GM12878 (cell line): ENCODE measurements at regions of chr12 and their contacts with region 1.

Region 1: GRCh38 chr12:49515266-49515665 is 23.6 kb upstream of the KCNH3 start:
- DNase-seq: no peak
- ATAC-seq: no peak
- H3K4me3 ChIP-seq: no peak overlapping the region
- H3K27ac ChIP-seq: no peak overlapping the region
- H3K4me1 ChIP-seq: no peaks in the 10 kb centered on the region
- H3K27me3 ChIP-seq: no peaks in the 10 kb centered on the region
- CTCF ChIP-seq: no peak
- EP300 ChIP-seq: no peak
- POLR2A ChIP-seq: no peak
- RAD21 ChIP-seq: no peak

Region 2: DNA sequence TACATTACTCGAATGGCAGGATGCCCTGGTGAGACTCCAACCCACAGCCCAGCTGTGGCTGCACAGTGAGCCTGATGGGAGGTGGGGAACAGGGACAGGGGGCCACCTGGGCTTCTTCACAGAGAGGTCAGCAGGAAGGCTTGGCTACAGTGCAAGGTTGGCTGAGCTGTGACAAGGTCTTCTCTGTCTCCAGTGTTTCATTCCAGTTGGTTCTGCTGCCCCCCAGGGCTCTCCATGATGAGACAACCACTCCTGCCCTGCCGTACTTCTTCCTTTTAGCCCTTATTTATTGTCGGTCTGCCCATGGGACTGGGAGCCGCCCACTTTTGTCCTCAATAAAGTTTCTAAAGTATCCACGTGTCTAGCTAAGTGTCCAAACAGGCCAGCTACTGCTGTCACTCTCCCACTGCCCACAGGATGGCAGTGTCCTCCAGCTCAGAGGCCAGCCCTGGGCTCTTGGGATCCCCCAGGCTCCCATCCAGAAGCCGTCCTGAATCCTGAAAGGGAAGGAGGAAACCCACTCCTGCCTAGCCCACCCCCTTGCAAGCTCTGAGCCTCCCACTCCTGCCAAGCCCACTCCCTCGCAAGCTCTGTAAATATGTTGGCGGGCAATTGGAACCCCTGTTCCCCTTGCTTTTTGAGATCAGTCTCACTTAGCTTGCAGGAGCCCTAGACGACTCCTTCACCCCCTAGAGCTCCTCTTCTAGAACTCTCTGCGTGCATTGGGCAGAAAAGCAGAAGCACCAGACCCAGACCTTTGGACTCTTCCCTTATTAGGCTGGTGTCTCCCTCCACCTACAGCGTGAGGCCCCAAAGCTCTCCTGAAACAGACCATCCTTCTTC is 183.7 kb before region 1 on chr12:
- CTCF ChIA-PET with region 1: interaction called, 24 read pairs
- POLR2A ChIA-PET with region 1: no interaction called
- RAD21 ChIA-PET with region 1: no interaction called
- SMC1A ChIA-PET with region 1: interaction called, 8 read pairs
- in situ Hi-C with region 1: no loop called
- intact Hi-C with region 1: no loop called
- DNase-seq: no peak
- ATAC-seq: peak; percentile 85
- H3K4me3 ChIP-seq: no peak overlapping the region
- H3K27ac ChIP-seq: no peak overlapping the region
- H3K4me1 ChIP-seq: no peaks in the 10 kb centered on the region
- H3K27me3 ChIP-seq: peaks cover 3 to 12% of the 10 kb centered on the region in 2 experiments
- CTCF ChIP-seq: peak; percentile 55 to 68 (median 59)
- EP300 ChIP-seq: no peak
- POLR2A ChIP-seq: no peak
- RAD21 ChIP-seq: peak; percentile 58

Region 3: DNA sequence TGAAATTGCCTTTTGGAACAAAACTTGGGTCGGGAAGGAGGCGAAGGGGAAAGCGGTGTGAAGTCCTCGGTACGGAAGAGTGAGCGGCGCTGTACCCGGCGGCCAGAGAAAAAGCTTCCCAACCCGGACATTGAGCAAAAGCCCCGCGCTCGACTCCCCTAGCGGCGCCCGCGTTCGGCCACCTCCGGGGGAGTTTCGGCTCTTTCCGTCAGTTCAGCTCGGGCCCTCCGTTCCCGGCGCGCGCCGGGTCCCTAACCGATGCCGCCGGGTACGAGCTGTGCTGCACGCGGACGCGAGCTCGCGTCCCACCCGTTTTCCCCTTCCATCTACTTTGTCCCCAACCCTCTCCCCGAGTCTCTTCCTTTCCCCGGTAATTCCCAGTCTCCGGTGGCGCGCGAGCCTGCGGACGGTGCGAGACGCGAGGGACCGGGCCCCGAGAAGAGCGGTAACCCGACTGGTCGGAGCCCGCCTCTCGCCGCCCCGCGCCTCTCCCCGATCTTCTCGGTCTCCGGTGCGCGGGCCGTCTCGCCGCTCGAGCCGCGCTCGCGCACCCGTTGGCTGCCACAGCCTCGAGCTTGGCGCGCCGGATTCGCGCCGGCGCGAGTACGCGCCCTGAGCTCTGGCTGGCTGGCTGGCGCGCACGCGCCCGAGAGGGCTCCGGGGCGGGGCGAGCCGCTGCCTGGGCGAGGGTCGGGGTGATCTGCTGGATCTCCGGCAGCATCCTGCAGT is 148.4 kb before region 1 on chr12:
- CTCF ChIA-PET with region 1: interaction called, 712 read pairs
- POLR2A ChIA-PET with region 1: interaction called, 5 read pairs
- RAD21 ChIA-PET with region 1: interaction called, 258 read pairs
- SMC1A ChIA-PET with region 1: interaction called, 740 read pairs
- in situ Hi-C with region 1: loop called (anchors 5 kb)
- intact Hi-C with region 1: no loop called
- DNase-seq: peak; percentile 73
- ATAC-seq: peak; percentile 84
- H3K4me3 ChIP-seq: peak overlapping the region; percentile 89
- H3K27ac ChIP-seq: peak overlapping the region; percentile 97
- H3K4me1 ChIP-seq: peaks cover 16% of the 10 kb centered on the region
- H3K27me3 ChIP-seq: no peaks in the 10 kb centered on the region
- CTCF ChIP-seq: peak in 2 of 3 experiments; percentile 8 to 10; a peak in 1 of 6 replicates
- EP300 ChIP-seq: no peak
- POLR2A ChIP-seq: peak; percentile 87
- RAD21 ChIP-seq: no peak

Region 4: GRCh38 chr12:49482095-49483051 is 32.9 kb before region 1 on chr12:
- CTCF ChIA-PET with region 1: interaction called, 24 read pairs
- POLR2A ChIA-PET with region 1: interaction called, 3 read pairs
- RAD21 ChIA-PET with region 1: interaction called, 4 read pairs
- SMC1A ChIA-PET with region 1: interaction called, 4 read pairs
- in situ Hi-C with region 1: no loop called
- intact Hi-C with region 1: no loop called
- DNase-seq: no peak
- ATAC-seq: peak; percentile 54
- H3K4me3 ChIP-seq: no peak overlapping the region
- H3K27ac ChIP-seq: no peak overlapping the region
- H3K4me1 ChIP-seq: peaks cover 2% of the 10 kb centered on the region
- H3K27me3 ChIP-seq: no peaks in the 10 kb centered on the region
- CTCF ChIP-seq: no peak
- EP300 ChIP-seq: no peak
- POLR2A ChIP-seq: no peak
- RAD21 ChIP-seq: no peak

Region 5: DNA sequence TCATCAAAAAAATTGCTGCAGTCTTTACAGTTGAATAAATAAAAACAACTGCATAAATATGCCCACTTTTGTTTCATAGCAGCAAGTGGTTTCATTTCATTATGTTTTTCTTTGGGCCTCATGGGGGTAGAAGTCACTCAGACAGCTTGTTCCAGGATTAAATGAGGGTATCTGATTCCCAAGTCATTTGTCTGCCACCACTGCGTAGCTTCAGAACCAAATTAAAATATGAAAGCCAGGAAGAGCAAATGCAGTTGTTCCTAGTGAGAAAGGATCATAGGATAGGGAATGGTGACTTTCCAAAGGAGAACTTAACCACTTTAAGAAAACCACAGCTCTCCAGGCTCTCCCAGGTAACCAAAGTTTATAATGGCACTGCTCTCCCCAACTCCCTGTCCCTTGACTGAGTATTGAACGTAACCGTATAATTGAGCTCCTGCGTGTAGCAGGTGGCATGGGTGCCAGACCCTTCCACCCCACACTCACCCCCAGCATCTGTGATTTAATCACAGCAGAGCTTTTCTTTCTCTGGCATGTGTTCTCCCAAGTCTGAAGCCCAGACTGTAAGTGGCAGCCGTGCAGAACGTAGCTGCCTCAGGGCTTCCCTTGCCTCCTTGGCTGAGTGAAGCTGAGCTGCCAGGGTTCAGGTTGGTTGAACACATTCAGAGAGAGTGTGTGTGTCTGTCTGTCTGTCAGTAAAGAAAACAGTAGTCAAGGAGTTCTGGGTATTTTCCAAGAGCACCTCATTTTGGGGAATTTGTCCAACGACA is 12.3 kb after region 1 on chr12:
- CTCF ChIA-PET with region 1: interaction called, 15 read pairs
- POLR2A ChIA-PET with region 1: interaction called, 4 read pairs
- RAD21 ChIA-PET with region 1: interaction called, 4 read pairs
- SMC1A ChIA-PET with region 1: interaction called, 7 read pairs
- in situ Hi-C with region 1: no loop called
- intact Hi-C with region 1: no loop called
- DNase-seq: no peak
- ATAC-seq: no peak
- H3K4me3 ChIP-seq: no peak overlapping the region
- H3K27ac ChIP-seq: no peak overlapping the region
- H3K4me1 ChIP-seq: no peaks in the 10 kb centered on the region
- H3K27me3 ChIP-seq: no peaks in the 10 kb centered on the region
- CTCF ChIP-seq: no peak
- EP300 ChIP-seq: no peak
- POLR2A ChIP-seq: no peak
- RAD21 ChIP-seq: no peak